ENCODE measurements at regions of chr10 and their contacts with region 1.

Region 1: DNA sequence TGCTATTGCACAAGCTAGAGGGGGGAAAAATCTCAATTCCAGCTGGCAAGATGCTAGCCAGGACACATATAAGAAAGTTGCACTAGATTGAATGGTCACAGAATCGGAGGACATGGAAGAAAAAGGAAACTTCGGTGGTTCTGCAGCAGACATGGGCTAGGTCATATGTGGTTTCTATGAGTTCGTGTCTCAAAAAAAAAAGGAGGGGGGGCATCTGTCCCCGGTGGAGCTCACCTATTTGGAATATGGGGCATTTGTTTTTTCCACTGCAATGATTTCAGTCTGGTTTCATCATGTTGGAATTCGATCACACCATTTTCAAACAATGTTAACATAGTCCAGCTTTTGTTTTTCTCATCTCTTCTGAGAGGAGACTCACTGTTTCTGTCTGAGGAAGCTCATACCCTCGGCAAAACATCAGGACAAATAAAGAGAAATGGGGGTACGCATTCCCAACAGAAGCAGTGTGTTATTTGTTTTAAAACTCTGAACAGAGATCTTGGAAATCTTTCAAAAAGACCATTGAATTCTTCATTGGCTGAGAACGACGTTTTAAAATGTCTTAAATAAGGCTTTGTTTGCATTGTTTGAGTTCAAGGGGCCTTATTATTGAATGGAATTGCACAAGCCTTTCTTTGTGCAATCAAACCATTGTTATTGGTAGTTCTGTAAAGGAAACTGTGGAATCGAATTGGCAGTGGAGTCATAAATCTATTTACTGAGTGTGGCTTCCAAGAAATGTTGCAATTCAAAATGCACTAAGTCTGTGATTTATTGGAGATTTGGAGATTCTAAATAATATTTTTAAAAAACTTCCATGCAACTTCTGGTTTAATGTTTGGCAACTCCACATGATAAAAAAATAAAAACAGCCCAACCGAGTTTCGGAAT is 173.2 kb downstream of the RTKN2 start:
- DNase-seq: peak in 1 of 2 experiments; percentile 82
- H3K4me3 ChIP-seq: no peak overlapping the region
- H3K4me3 Mint-ChIP-seq: peak overlapping the region; percentile 35
- H3K27ac Mint-ChIP-seq: peak overlapping the region; percentile 88
- H3K4me1 ChIP-seq: peaks cover 84% of the 10 kb centered on the region
- H3K4me1 Mint-ChIP-seq: peaks cover 70% of the 10 kb centered on the region
- H3K27me3 ChIP-seq: no peaks in the 10 kb centered on the region
- H3K27me3 Mint-ChIP-seq: no peaks in the 10 kb centered on the region
- CTCF ChIP-seq: no peak

Region 2: DNA sequence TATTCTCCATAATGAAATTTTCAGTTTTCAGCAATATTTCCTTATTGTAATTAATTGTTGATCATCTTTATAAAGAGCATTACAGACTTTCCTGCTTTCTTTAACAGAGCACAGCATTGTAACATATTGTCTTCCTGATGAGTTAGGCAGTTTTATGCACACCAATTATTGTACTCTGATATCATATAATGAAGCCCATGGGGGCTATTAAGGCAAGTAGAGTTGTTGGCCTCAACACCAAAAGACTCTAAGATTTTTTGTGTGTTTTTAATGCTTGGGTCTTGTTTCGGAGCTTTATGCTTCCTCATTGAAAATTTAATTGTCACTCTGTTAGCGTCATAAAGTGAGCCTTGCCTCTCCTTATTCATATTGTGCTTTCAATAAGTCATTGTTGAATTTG is 243.2 kb before region 1 on chr10:
- CTCF ChIA-PET with region 1: interaction called, 3 read pairs
- POLR2A ChIA-PET with region 1: no interaction called
- intact Hi-C with region 1: loop called (anchors 2 kb)
- DNase-seq: no peak
- H3K4me3 ChIP-seq: no peak overlapping the region
- H3K4me3 Mint-ChIP-seq: no peak overlapping the region
- H3K27ac Mint-ChIP-seq: peak overlapping the region; percentile 51
- H3K4me1 ChIP-seq: peaks cover 46% of the 10 kb centered on the region
- H3K4me1 Mint-ChIP-seq: peaks cover 44% of the 10 kb centered on the region
- H3K27me3 ChIP-seq: no peaks in the 10 kb centered on the region
- H3K27me3 Mint-ChIP-seq: no peaks in the 10 kb centered on the region
- CTCF ChIP-seq: no peak

Region 3: GRCh38 chr10:62038609-62039190 is 56.7 kb before region 1 on chr10:
- CTCF ChIA-PET with region 1: interaction called, 19 read pairs
- POLR2A ChIA-PET with region 1: interaction called, 13 read pairs
- intact Hi-C with region 1: loop called (anchors 1 kb)
- DNase-seq: peak; percentile 84 to 85
- H3K4me3 ChIP-seq: no peak overlapping the region
- H3K4me3 Mint-ChIP-seq: peak overlapping the region; percentile 50
- H3K27ac Mint-ChIP-seq: peak overlapping the region; percentile 56
- H3K4me1 ChIP-seq: peaks cover 95% of the 10 kb centered on the region
- H3K4me1 Mint-ChIP-seq: peaks cover 93% of the 10 kb centered on the region
- H3K27me3 ChIP-seq: no peaks in the 10 kb centered on the region
- H3K27me3 Mint-ChIP-seq: no peaks in the 10 kb centered on the region
- CTCF ChIP-seq: peak; percentile 93 to 98

Region 4: GRCh38 chr10:62059217-62059920 is 36.1 kb before region 1 on chr10:
- CTCF ChIA-PET with region 1: no interaction called
- POLR2A ChIA-PET with region 1: no interaction called
- intact Hi-C with region 1: no loop called
- DNase-seq: no peak
- H3K4me3 ChIP-seq: no peak overlapping the region
- H3K4me3 Mint-ChIP-seq: no peak overlapping the region
- H3K27ac Mint-ChIP-seq: peak overlapping the region; percentile 4
- H3K4me1 ChIP-seq: peaks cover 37% of the 10 kb centered on the region
- H3K4me1 Mint-ChIP-seq: peaks cover 61% of the 10 kb centered on the region
- H3K27me3 ChIP-seq: no peaks in the 10 kb centered on the region
- H3K27me3 Mint-ChIP-seq: no peaks in the 10 kb centered on the region
- CTCF ChIP-seq: no peak

Region 5: GRCh38 chr10:62069452-62070178 is 25.8 kb before region 1 on chr10:
- CTCF ChIA-PET with region 1: no interaction called
- POLR2A ChIA-PET with region 1: no interaction called
- intact Hi-C with region 1: no loop called
- DNase-seq: no peak
- H3K4me3 ChIP-seq: no peak overlapping the region
- H3K4me3 Mint-ChIP-seq: no peak overlapping the region
- H3K27ac Mint-ChIP-seq: peak overlapping the region; percentile 29
- H3K4me1 ChIP-seq: no peaks in the 10 kb centered on the region
- H3K4me1 Mint-ChIP-seq: peaks cover 33% of the 10 kb centered on the region
- H3K27me3 ChIP-seq: no peaks in the 10 kb centered on the region
- H3K27me3 Mint-ChIP-seq: no peaks in the 10 kb centered on the region
- CTCF ChIP-seq: no peak

Region 6: GRCh38 chr10:62112271-62112769 is 16.9 kb after region 1 on chr10:
- CTCF ChIA-PET with region 1: no interaction called
- POLR2A ChIA-PET with region 1: interaction called, 3 read pairs
- intact Hi-C with region 1: loop called (anchors 1 kb)
- DNase-seq: peak in 1 of 2 experiments; percentile 43
- H3K4me3 ChIP-seq: no peak overlapping the region
- H3K4me3 Mint-ChIP-seq: no peak overlapping the region
- H3K27ac Mint-ChIP-seq: peak overlapping the region; percentile 48
- H3K4me1 ChIP-seq: peaks cover 31% of the 10 kb centered on the region
- H3K4me1 Mint-ChIP-seq: peaks cover 41% of the 10 kb centered on the region
- H3K27me3 ChIP-seq: no peaks in the 10 kb centered on the region
- H3K27me3 Mint-ChIP-seq: no peaks in the 10 kb centered on the region
- CTCF ChIP-seq: no peak

Region 7: DNA sequence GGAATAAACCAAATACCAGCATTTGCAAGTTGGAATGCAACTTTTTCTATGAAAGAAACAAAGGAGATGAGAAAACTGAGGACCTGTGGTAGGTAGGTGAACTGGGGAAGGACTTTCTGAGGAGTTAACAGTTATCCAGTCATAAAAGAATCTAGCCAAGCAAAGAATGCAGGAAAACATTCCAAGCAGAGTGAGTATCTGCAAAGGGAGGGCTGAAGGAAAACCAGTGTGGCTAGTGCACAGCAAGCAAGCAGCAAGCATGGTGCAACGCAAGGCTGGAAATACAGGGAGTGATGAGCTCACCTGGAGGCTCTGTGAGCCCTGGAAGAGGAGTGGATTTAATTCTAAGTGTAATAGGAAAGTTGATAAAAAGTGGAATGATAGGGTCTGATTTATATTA is 129.2 kb after region 1 on chr10:
- CTCF ChIA-PET with region 1: no interaction called
- POLR2A ChIA-PET with region 1: no interaction called
- intact Hi-C with region 1: loop called (anchors 2 kb)
- DNase-seq: peak; percentile 80 to 81
- H3K4me3 ChIP-seq: no peak overlapping the region
- H3K4me3 Mint-ChIP-seq: no peak overlapping the region
- H3K27ac Mint-ChIP-seq: peak overlapping the region; percentile 84
- H3K4me1 ChIP-seq: peaks cover 31% of the 10 kb centered on the region
- H3K4me1 Mint-ChIP-seq: peaks cover 14% of the 10 kb centered on the region
- H3K27me3 ChIP-seq: no peaks in the 10 kb centered on the region
- H3K27me3 Mint-ChIP-seq: no peaks in the 10 kb centered on the region
- CTCF ChIP-seq: no peak

Measured in Caco-2 (cell line).